IMR-90 (cell line): ENCODE measurements at regions of chr15 and their contacts with region 1.

Region 1: GRCh38 chr15:47422901-47423665 is 294.2 kb upstream of the SEMA6D start:
- DNase-seq: peak; percentile 42
- ATAC-seq: peak; percentile 80
- H3K4me3 ChIP-seq: no peak overlapping the region
- H3K27ac ChIP-seq: no peak overlapping the region
- H3K4me1 ChIP-seq: peaks cover 7% of the 10 kb centered on the region
- H3K27me3 ChIP-seq: no peaks in the 10 kb centered on the region
- CTCF ChIP-seq: no peak
- POLR2A ChIP-seq: no peak
- RAD21 ChIP-seq: no peak

Region 2: DNA sequence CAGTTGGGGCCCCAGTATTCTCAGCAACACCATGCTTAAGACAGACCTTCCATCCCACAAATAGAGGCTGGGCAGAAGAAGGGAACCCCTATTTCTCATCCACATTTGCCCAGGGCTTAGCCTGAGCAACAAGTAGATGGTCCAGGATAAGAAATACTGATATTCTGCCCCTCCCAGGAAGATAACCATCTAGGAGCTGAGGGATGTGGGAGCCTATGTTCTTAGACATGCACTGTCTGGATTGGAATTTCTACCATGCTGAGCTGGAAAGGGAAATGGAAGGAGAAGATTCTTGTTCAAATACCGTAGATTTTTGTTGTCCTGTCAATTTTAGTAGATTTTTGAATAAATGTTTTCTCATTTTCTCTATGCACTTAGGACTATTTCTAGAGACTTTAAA is 156.5 kb before region 1 on chr15:
- CTCF ChIA-PET with region 1: no interaction called
- POLR2A ChIA-PET with region 1: no interaction called
- dilution Hi-C with region 1: no loop called
- in situ Hi-C with region 1: no loop called
- intact Hi-C with region 1: no loop called
- DNase-seq: no peak
- ATAC-seq: no peak
- H3K4me3 ChIP-seq: no peak overlapping the region
- H3K27ac ChIP-seq: no peak overlapping the region
- H3K4me1 ChIP-seq: no peaks in the 10 kb centered on the region
- H3K27me3 ChIP-seq: no peaks in the 10 kb centered on the region
- CTCF ChIP-seq: no peak
- POLR2A ChIP-seq: no peak
- RAD21 ChIP-seq: no peak

Region 3: DNA sequence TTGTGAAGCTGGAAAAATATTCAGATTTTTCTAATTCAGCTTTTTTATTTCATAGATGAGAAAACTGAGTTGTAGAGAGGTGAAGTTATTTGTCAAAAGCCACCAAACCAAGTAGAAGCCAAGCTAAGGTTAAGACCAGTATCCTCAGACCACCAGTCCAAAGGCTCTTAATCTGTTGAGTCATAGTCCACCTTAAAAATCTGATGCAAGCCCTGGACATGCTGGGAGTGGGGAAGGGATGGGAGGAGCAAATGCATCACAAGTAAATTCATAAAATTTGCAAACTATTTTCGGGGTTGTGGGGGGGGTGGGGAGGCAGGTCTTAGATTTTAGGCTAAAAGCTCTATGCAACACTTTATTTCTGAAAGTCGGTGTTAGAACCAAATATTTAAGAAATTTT is 13.5 kb before region 1 on chr15:
- CTCF ChIA-PET with region 1: no interaction called
- POLR2A ChIA-PET with region 1: no interaction called
- dilution Hi-C with region 1: no loop called
- in situ Hi-C with region 1: no loop called
- intact Hi-C with region 1: loop called (anchors 1 kb)
- DNase-seq: peak; percentile 58
- ATAC-seq: no peak
- H3K4me3 ChIP-seq: no peak overlapping the region
- H3K27ac ChIP-seq: no peak overlapping the region
- H3K4me1 ChIP-seq: peaks cover 10% of the 10 kb centered on the region
- H3K27me3 ChIP-seq: no peaks in the 10 kb centered on the region; the same call in 1 of the 2 replicates
- CTCF ChIP-seq: no peak
- POLR2A ChIP-seq: no peak
- RAD21 ChIP-seq: no peak

Region 4: GRCh38 chr15:47602121-47602520 is 179.0 kb after region 1 on chr15:
- CTCF ChIA-PET with region 1: no interaction called
- POLR2A ChIA-PET with region 1: no interaction called
- dilution Hi-C with region 1: no loop called
- in situ Hi-C with region 1: no loop called
- intact Hi-C with region 1: no loop called
- DNase-seq: no peak
- ATAC-seq: no peak
- H3K4me3 ChIP-seq: no peak overlapping the region
- H3K27ac ChIP-seq: no peak overlapping the region
- H3K4me1 ChIP-seq: no peaks in the 10 kb centered on the region
- H3K27me3 ChIP-seq: no peaks in the 10 kb centered on the region; the same call in 1 of the 2 replicates
- CTCF ChIP-seq: no peak
- POLR2A ChIP-seq: no peak
- RAD21 ChIP-seq: no peak

Region 5: DNA sequence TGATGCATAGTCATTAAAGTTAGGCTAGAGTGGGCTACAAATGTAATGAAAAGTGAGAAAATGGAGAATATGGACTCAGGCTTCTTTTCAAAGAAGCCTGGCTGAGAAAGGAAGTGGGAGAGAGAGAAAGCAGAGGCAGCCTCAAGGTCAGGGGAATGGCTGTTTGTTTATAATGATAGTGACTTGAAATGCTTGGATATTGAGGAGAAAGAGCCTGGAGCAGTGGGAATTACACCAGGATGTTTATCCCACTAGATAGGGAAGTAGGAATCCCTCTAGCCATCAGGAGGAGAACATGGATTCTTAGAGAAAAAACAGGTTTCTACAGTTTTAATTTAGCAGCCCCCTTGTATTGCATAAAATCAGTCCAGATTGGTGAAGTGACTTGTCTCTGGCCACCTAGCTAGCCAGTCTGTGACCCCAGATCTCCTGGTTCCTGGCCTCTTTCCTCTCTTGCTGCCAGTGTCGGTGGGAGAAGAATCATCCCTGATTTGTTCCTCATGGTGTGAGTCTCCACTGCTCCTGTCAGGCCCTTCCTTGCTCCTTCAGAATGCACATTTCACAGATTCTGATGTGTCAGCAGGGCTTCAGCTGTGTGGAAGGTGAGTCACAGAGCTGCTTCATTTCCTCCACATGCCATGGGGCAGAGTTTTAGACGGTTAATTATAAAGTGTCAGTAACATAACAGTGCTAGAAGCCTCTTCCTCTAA is 327.1 kb after region 1 on chr15:
- CTCF ChIA-PET with region 1: no interaction called
- POLR2A ChIA-PET with region 1: no interaction called
- dilution Hi-C with region 1: no loop called
- in situ Hi-C with region 1: no loop called
- intact Hi-C with region 1: no loop called
- DNase-seq: peak; percentile 91
- ATAC-seq: peak; percentile 99
- H3K4me3 ChIP-seq: no peak overlapping the region
- H3K27ac ChIP-seq: peak overlapping the region; percentile 55
- H3K4me1 ChIP-seq: peaks cover 9% of the 10 kb centered on the region
- H3K27me3 ChIP-seq: no peaks in the 10 kb centered on the region
- CTCF ChIP-seq: no peak
- POLR2A ChIP-seq: no peak
- RAD21 ChIP-seq: no peak